K562 (cell line): ENCODE measurements at regions of chr1 and their contacts with region 1.

Region 1: GRCh38 chr1:169546087-169546995 is 39.9 kb downstream of the F5 start:
- DNase-seq: peak; percentile 28 to 82 (median 40)
- ATAC-seq: peak; percentile 91
- H3K4me3 ChIP-seq: no peak overlapping the region
- H3K27ac ChIP-seq: no peak overlapping the region
- H3K4me1 ChIP-seq: no peaks in the 10 kb centered on the region; a peak in 2 of 5 replicates
- H3K27me3 ChIP-seq: 0 out of 5 replicates have a peak, but pooled peaks cover 0 to 2% of the 10 kb centered on the region in 2 experiments
- CTCF ChIP-seq: peak; percentile 72 to 83 (median 76)
- EP300 ChIP-seq: no peak
- POLR2A ChIP-seq: no peak
- RAD21 ChIP-seq: peak; percentile 96 to 97

Region 2: GRCh38 chr1:168603501-168604110 is 942.7 kb before region 1 on chr1:
- CTCF ChIA-PET with region 1: no interaction called
- POLR2A ChIA-PET with region 1: no interaction called
- in situ Hi-C with region 1: loop called (anchors 5 kb)
- intact Hi-C with region 1: loop called (anchors 2 kb)
- DNase-seq: peak; percentile 62 to 76 (median 68)
- ATAC-seq: peak; percentile 97
- H3K4me3 ChIP-seq: no peak overlapping the region
- H3K27ac ChIP-seq: no peak overlapping the region
- H3K4me1 ChIP-seq: no peaks in the 10 kb centered on the region
- H3K27me3 ChIP-seq: peaks cover 2 to 4% of the 10 kb centered on the region in 2 experiments; a peak in 2 of 5 replicates
- CTCF ChIP-seq: peak; percentile 80 to 88 (median 87)
- EP300 ChIP-seq: no peak
- POLR2A ChIP-seq: no peak
- RAD21 ChIP-seq: peak; percentile 92 to 95

Region 3: GRCh38 chr1:169348383-169349036 is 197.8 kb before region 1 on chr1:
- CTCF ChIA-PET with region 1: no interaction called
- POLR2A ChIA-PET with region 1: no interaction called
- in situ Hi-C with region 1: no loop called
- intact Hi-C with region 1: loop called (anchors 2 kb)
- DNase-seq: peak in 3 of 4 experiments; percentile 27 to 76 (median 28)
- ATAC-seq: peak; percentile 74
- H3K4me3 ChIP-seq: no peak overlapping the region
- H3K27ac ChIP-seq: no peak overlapping the region
- H3K4me1 ChIP-seq: peaks cover 0 to 10% of the 10 kb centered on the region in 2 experiments; a peak in 3 of 5 replicates
- H3K27me3 ChIP-seq: no peaks in the 10 kb centered on the region
- CTCF ChIP-seq: peak; percentile 43 to 87 (median 68); a peak in 5 of 6 replicates
- EP300 ChIP-seq: no peak
- POLR2A ChIP-seq: no peak
- RAD21 ChIP-seq: peak; percentile 96 to 98

Region 4: DNA sequence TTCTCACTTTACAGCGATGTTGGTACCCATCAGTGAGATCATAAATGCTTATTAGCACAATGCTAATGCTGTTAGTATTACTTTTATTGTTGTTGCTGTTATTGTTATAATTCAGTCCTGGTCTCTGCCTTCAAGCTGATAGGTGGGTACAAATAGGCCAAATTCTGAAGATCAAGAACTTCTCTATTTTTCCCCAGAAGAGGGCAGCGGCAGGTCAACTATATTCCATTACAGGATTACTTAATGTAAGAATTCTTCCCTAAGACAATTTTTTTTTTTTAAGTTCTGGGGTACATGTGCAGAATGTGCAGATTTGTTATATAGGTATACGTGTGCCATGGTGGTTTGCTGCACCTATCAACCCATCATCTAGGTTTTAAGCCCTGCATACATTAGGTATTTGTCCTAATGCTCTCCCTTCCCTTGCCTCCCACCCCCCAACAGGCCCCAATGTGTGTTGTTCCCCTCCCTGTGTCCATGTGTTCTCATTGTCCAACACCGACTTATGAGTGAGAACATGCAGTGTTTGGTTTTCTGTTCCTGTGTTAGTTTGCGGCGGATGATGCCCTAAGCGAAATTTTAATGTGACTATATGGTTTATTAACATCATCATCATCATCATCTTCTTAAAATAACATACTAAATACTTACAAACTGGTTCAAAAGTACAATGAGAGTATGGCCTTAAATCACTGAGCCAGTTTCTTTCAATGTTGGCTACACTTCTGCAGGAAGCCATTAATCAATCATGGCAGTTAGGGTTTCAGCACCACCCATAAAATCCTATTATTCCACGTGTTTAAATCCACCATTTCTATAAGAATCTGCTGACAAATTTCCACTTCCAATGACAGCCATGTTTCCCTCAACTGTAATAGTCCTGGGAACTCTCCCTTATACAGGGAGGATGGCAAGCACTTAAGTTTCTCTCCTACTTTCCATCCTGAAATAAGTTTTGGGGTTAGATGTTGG is 79.8 kb before region 1 on chr1:
- CTCF ChIA-PET with region 1: interaction called, 32 read pairs
- POLR2A ChIA-PET with region 1: no interaction called
- in situ Hi-C with region 1: no loop called
- intact Hi-C with region 1: loop called (anchors 1 kb)
- DNase-seq: peak in 3 of 4 experiments; percentile 34 to 53 (median 42)
- ATAC-seq: peak; percentile 79
- H3K4me3 ChIP-seq: no peak overlapping the region
- H3K27ac ChIP-seq: no peak overlapping the region
- H3K4me1 ChIP-seq: no peaks in the 10 kb centered on the region
- H3K27me3 ChIP-seq: no peaks in the 10 kb centered on the region
- CTCF ChIP-seq: peak; percentile 39 to 66 (median 47); a peak in 5 of 6 replicates
- EP300 ChIP-seq: no peak
- POLR2A ChIP-seq: no peak
- RAD21 ChIP-seq: peak; percentile 70 to 79

Region 5: DNA sequence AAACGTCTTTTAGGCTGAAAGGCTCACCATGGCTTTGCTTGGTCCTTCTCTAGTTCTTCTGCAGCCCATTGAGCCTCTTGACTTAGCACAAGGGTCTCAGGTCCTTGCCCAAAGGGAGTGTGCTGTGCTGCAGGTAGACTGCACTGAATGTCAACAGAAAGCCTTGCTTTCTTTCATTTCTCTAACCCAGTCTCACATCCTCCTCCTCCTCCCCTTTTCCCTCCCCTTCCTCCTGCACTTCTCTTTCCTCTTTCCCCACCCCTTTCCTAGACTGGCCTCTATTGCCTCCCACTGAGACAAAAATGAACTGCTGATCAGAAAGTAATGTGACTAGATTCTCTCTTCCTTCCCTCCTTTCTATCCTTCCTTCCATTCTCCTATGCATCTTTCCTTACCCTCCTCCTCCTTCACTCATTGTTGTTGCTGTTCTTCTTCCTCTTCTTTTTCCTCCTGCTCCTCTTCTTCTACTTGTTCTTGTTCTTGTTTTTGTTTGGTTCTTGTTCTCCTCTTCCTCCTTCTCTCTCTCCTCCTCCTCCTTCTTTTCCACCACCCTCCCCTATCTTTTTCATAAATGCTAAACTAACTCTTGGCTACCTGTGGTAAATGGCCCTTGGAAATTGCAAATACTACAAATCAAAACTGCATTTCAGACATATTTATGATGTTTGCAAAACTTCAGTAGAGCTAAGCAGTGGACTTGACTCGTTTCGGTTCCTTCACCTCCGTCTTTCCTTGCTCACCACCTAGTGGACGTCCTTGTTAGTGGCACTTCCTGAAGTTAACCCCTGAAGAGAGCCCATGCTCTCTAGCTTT is 165.3 kb after region 1 on chr1 and contains the start of gene SELL:
- CTCF ChIA-PET with region 1: no interaction called
- POLR2A ChIA-PET with region 1: no interaction called
- in situ Hi-C with region 1: no loop called
- intact Hi-C with region 1: loop called (anchors 1 kb)
- DNase-seq: peak; percentile 51 to 69 (median 62)
- ATAC-seq: peak; percentile 98
- H3K4me3 ChIP-seq: no peak within 1 kb of the TSS
- H3K27ac ChIP-seq: no peak within 1 kb of the TSS
- H3K4me1 ChIP-seq: no peaks in the 10 kb centered on the region
- H3K27me3 ChIP-seq: no peaks in the 10 kb centered on the region
- CTCF ChIP-seq: peak; percentile 77 to 82 (median 78)
- EP300 ChIP-seq: no peak
- POLR2A ChIP-seq: no peak
- RAD21 ChIP-seq: peak; percentile 77 to 78
- polyA plus RNA-seq, gene SELL: not detected

Region 6: DNA sequence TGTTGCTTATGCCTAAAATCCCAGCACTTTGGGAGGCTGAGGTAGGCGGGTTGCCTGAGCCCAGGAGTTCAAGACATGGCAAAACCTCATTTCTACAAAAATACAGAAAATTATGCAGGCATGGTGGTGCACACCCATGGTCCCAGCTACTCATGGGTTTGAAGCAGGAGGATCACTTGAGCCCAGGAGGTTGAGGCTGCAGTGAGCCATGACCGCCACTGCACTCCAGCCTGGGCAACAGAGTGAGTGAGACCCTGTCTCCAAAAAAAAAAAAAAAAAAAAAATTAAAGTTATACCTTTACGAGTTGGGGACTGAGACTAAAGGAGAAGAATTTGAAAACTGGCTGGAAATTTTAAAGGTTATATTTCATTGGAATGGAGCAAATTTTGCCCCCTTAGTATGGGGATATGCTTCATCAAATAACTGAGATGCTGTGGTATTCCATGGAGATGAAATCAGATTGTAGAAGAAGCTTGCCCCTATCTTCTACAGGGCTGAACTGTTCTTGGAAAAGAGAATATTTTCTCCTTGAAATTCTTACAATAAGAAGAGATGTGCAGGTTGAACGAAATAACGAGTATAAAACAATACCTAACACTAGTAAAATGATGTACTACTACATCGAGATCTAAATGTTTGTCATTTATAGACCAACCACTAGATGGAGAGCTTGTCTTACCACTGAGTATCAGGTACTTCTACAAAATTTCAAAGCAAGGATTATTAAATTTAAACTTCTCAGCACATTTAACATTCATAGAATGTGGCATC is 382.3 kb after region 1 on chr1:
- CTCF ChIA-PET with region 1: no interaction called
- POLR2A ChIA-PET with region 1: no interaction called
- in situ Hi-C with region 1: no loop called
- intact Hi-C with region 1: loop called (anchors 10 kb)
- DNase-seq: peak; percentile 25 to 60 (median 30)
- ATAC-seq: peak; percentile 88
- H3K4me3 ChIP-seq: no peak overlapping the region
- H3K27ac ChIP-seq: no peak overlapping the region
- H3K4me1 ChIP-seq: no peaks in the 10 kb centered on the region
- H3K27me3 ChIP-seq: no peaks in the 10 kb centered on the region
- CTCF ChIP-seq: peak; percentile 55 to 85 (median 60); a peak in 5 of 6 replicates
- EP300 ChIP-seq: no peak
- POLR2A ChIP-seq: no peak
- RAD21 ChIP-seq: peak; percentile 94 to 96